Activated CD4-positive, alpha-beta T cell treated with anti-CD3 and anti-CD28 coated beads, Interleukin-2, amount 10 ng/mL, durations not matched to agents 7 days and 5 days (primary cell): ENCODE measurements at regions of chr6 and their contacts with region 1.

Region 1: GRCh38 chr6:90204327-90205056 is 92.2 kb downstream of the BACH2 start:
- DNase-seq: no peak
- H3K4me3 Mint-ChIP-seq: no peak overlapping the region
- H3K27ac Mint-ChIP-seq: no peak overlapping the region
- H3K4me1 Mint-ChIP-seq: peaks cover 69% of the 10 kb centered on the region
- H3K27me3 Mint-ChIP-seq: no peaks in the 10 kb centered on the region

Region 2: DNA sequence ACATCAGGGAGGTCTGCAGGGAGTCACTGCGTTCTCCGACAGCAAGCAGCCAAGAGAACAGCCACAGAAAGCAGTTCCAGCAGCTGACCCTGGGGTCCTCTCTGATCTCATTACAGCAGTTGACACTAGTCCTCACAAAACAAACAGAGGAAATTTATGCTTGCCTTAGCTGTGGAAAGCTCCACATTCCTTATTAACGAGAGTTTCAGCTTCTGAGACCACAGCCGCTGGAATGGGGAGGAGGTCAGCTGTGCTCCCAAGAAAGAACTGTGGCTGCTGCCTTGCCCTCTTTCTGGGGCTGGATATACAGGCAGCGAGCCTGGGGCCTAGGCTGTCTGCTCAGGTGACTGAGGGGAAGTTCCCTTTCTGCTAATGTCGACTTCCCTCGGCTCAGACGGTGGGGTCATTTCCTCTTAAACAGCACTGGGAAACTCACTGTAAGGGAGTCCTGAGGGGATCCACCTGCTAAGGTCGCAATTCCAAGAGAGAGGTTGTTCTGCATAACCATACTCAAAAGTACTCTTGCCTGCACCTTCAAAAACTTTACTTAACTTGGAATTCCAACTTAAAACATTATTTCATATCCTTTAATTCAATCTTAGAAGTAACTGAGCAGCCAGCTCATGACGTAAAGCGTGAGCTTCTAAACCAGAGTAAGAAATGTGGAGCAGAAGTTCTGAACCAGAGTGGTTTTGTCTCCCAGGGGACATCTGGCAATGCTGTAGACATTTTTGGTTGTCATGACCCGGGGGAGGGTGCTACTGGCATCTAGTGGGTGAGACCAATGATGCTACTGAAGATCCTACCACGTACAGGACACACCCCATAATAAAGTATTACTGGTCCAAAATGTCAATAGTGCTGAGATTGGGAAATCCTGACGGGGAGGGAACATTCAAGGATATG is 11.8 kb after region 1 on chr6:
- CTCF ChIA-PET with region 1: interaction called, 10 read pairs
- POLR2A ChIA-PET with region 1: no interaction called
- DNase-seq: peak; percentile 39
- H3K4me3 Mint-ChIP-seq: peak overlapping the region; percentile 11
- H3K27ac Mint-ChIP-seq: no peak overlapping the region
- H3K4me1 Mint-ChIP-seq: peaks cover 30% of the 10 kb centered on the region
- H3K27me3 Mint-ChIP-seq: no peaks in the 10 kb centered on the region